Astrocyte of the cerebellum (primary cell): ENCODE measurements at regions of chr16 and their contacts with region 1.

Region 1: GRCh38 chr16:68719993-68720489 is 17.1 kb upstream of the CDH1 start:
- DNase-seq: no peak
- H3K4me3 ChIP-seq: no peak overlapping the region
- CTCF ChIP-seq: no peak

Region 2: DNA sequence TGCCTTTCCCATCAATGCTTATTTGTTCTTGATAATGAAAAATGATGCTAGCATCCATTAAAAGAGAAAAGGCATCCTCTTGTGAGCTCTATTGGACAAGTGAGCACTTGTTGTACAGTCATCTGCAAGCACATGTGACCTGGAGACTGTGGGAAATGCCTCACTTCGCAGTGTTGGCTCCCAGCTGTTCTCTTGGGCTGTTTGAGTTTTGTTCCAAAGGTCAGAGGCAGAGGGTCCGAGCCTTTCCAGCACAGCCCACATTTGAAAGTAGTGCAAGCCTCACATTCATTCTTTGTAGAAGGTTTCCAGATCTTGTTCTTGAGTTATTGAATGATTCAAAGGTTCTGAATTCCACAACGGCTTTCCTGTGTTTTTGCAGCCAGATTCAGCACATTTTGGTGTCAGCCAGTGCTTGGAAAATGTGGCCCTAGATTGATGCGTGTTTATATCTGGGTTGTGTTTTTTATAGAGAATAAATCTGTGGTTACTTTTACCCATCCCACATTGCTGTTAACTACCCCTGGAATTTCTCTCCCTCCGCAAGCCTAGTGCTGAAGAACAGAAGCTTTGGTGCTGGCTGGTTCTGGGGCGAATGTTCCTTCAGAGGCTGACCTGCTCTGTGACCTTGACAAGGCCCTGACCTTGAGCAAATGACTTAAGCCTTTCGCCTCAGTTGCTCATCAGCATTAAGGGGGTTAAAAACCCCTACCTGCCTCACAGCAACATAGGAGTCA is 66.8 kb after region 1 on chr16:
- in situ Hi-C with region 1: loop called (anchors 5 kb)
- DNase-seq: peak; percentile 84
- H3K4me3 ChIP-seq: no peak overlapping the region
- CTCF ChIP-seq: no peak